A549 (cell line): ENCODE measurements at regions of chr13 and their contacts with region 1.

Region 1: GRCh38 chr13:49495783-49496762 is at the start of gene PHF11:
- DNase-seq: peak; percentile 23 to 56
- ATAC-seq: peak; percentile 86 to 89
- H3K4me3 ChIP-seq: peak within 1 kb of the TSS; percentile 83
- H3K27ac ChIP-seq: peak within 1 kb of the TSS; percentile 83 to 98
- H3K4me1 ChIP-seq: peaks cover 8% of the 10 kb centered on the region
- CTCF ChIP-seq: no peak
- EP300 ChIP-seq: no peak
- POLR2A ChIP-seq: peak; percentile 49
- RAD21 ChIP-seq: no peak
- polyA plus RNA-seq, gene PHF11: 11.7 and 13.4 TPM in 2 replicates

Region 2: DNA sequence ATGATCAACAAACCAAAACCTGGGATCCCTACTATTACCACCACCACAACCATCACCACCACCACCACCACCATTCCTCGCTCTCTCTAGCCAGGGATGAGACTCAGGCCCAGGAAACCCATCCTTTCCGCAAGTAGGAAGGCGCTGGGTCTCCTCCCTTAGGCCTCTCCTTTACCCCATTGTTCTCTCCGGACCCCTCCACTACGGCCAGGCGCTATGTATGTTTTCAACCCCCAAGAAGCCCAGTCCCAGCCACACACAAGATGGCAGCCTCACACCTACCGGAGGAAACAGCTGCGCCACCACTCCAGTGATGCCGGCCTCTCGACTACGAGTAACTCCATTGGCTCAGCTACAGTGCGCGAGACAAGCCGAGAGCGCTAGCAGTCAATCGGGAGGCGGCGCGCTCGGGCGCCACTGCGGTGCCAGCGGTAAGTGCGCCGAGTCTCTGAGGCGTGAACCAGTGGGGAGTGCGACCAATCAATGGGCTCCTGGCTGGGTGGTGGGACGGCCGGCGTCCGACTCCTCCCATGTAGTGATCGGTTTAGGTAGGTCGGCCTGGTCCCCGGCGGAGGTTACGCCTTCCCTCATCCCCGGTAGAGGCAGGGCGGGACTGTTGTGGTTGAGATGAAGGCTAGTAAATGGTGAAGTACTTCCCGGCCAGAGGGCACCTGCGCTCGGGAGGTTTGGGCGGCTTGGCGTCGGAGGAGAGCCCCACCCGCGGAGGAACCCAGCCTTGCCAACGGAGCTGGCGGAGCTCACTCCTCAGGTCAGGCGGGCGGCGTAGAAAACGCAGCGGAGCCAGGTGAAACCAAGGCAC is 52.2 kb before region 1 on chr13 and contains the starts of genes CAB39L and SETDB2:
- CTCF ChIA-PET with region 1: no interaction called
- POLR2A ChIA-PET with region 1: interaction called, 10 read pairs
- DNase-seq: peak; percentile 83 to 97
- ATAC-seq: peak; percentile 98 to 99
- H3K4me3 ChIP-seq: peak within 1 kb of the TSS; percentile 83
- H3K27ac ChIP-seq: peak within 1 kb of the TSS; percentile 87 to 92
- H3K4me1 ChIP-seq: peaks cover 4% of the 10 kb centered on the region; the same call in 1 of the 3 replicates
- CTCF ChIP-seq: no peak
- EP300 ChIP-seq: no peak
- POLR2A ChIP-seq: peak; percentile 64
- RAD21 ChIP-seq: no peak
- polyA plus RNA-seq, gene CAB39L: 4.8 and 5.2 TPM in 2 replicates
- polyA plus RNA-seq, gene SETDB2: 3.9 and 4.6 TPM in 2 replicates